ENCODE measurements at regions of chr6 and their contacts with region 1.

Region 1: GRCh38 chr6:63764318-63764916 is 128.8 kb downstream of the PHF3 start:
- H3K4me3 ChIP-seq: no peak overlapping the region
- H3K27ac ChIP-seq: no peak overlapping the region
- H3K4me1 ChIP-seq: no peaks in the 10 kb centered on the region
- CTCF ChIP-seq: no peak

Region 2: GRCh38 chr6:63307581-63308246 is 456.7 kb before region 1 on chr6:
- CTCF ChIA-PET with region 1: interaction called, 13 read pairs
- POLR2A ChIA-PET with region 1: no interaction called
- H3K4me3 ChIP-seq: no peak overlapping the region
- H3K27ac ChIP-seq: no peak overlapping the region
- H3K4me1 ChIP-seq: no peaks in the 10 kb centered on the region
- CTCF ChIP-seq: no peak

Region 3: DNA sequence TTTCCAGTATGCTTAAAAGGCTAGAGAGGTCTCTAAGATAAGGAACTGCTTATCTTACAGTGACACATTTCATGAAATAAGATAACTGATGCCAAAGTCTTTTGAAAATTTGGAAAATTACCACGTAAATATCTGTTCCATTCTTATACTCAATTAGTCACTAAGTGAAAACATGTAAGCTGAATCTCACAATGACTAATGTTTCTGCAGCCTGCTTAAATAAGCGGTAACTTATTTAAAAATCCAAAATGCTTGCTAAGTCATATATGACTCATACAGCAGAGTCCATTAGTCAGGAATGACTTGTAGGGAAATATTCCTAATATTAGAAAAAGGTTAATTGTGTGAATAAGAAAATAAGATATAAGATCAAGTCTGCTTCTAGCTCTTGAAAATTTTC is 416.8 kb before region 1 on chr6:
- CTCF ChIA-PET with region 1: interaction called, 50 read pairs
- POLR2A ChIA-PET with region 1: interaction called, 3 read pairs
- H3K4me3 ChIP-seq: no peak overlapping the region
- H3K27ac ChIP-seq: no peak overlapping the region
- H3K4me1 ChIP-seq: no peaks in the 10 kb centered on the region
- CTCF ChIP-seq: no peak

Region 4: GRCh38 chr6:63352587-63353285 is 411.7 kb before region 1 on chr6:
- CTCF ChIA-PET with region 1: interaction called, 50 read pairs
- POLR2A ChIA-PET with region 1: interaction called, 3 read pairs
- H3K4me3 ChIP-seq: no peak overlapping the region
- H3K27ac ChIP-seq: no peak overlapping the region
- H3K4me1 ChIP-seq: no peaks in the 10 kb centered on the region; the same call in 1 of the 2 replicates
- CTCF ChIP-seq: peak; percentile 59

Region 5: DNA sequence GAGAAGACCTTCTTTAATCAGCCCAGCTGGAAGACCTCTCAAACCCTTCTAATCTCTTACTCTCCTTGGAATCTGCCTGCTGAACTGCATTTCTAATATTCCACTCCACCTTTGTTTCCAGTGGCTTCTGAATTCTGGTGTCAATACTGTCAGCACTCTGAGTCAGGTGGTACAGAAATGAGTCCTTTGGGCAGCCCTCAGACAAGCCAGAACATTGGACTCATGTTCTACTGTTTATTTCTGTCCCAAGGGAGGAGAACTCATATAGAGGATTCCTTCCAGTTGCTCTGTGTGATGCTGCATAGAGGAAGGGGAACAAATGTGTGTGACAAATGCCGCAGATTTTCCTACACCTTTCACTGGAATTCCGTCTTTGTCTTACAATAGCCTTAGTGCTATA is 14.0 kb before region 1 on chr6:
- CTCF ChIA-PET with region 1: interaction called, 16 read pairs
- POLR2A ChIA-PET with region 1: no interaction called
- H3K4me3 ChIP-seq: no peak overlapping the region
- H3K27ac ChIP-seq: no peak overlapping the region
- H3K4me1 ChIP-seq: no peaks in the 10 kb centered on the region
- CTCF ChIP-seq: no peak

Region 6: DNA sequence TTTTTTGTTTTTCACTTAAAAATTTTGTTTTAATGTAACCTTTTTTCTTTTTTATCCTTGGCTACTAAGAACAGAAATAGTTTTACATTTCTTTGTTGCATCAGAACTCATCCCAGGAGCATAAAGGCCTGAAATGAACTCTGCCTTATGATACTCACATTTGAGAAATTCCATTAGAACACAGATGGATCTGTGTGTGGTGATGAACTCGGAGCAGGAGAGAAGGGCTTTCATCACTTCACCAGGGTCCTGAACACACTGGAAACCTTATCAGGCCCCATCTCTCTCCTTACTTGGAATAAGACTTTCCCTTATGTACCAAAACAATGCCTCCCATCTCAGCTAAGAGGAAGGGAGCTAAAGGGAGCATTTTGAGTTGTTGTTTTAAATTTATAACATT is 10.5 kb after region 1 on chr6:
- CTCF ChIA-PET with region 1: interaction called, 12 read pairs
- POLR2A ChIA-PET with region 1: no interaction called
- H3K4me3 ChIP-seq: no peak overlapping the region
- H3K27ac ChIP-seq: no peak overlapping the region
- H3K4me1 ChIP-seq: no peaks in the 10 kb centered on the region
- CTCF ChIP-seq: no peak

Region 7: GRCh38 chr6:63802606-63803206 is 38.3 kb after region 1 on chr6:
- CTCF ChIA-PET with region 1: interaction called, 23 read pairs
- POLR2A ChIA-PET with region 1: no interaction called
- H3K4me3 ChIP-seq: no peak overlapping the region
- H3K27ac ChIP-seq: no peak overlapping the region
- H3K4me1 ChIP-seq: peaks cover 9% of the 10 kb centered on the region
- CTCF ChIP-seq: no peak

Region 8: DNA sequence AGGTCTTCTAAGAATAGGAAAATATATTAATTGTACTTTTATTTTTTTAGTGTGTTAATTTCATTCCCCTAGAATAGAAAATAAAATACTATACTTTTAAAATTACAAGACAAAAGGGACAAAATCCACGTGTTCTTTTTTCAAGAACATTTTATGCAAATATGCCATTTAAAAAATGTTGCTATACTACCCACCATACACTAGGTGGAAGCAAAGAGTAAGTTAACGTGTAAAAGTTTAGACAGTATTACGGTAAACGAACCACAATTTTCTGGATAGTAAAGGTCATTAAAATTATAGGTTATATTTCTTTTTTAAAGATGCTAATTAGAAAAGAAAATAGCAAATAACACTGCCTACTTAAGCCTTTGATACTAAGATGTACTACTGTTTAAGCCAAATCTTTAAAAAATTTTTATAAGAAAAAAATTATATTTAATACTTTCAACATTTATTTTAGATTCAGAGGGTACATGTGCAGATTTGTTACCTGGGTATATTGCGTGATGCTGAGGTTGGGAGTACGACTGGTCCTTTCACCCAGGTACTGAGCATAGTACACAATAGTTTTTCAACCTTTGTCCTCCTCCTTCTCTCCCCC is 158.8 kb after region 1 on chr6:
- CTCF ChIA-PET with region 1: no interaction called
- POLR2A ChIA-PET with region 1: no interaction called
- H3K4me3 ChIP-seq: no peak overlapping the region
- H3K27ac ChIP-seq: no peak overlapping the region
- H3K4me1 ChIP-seq: no peaks in the 10 kb centered on the region
- CTCF ChIP-seq: no peak